ENCODE measurements at regions of chr4 and their contacts with region 1.

Region 1: DNA sequence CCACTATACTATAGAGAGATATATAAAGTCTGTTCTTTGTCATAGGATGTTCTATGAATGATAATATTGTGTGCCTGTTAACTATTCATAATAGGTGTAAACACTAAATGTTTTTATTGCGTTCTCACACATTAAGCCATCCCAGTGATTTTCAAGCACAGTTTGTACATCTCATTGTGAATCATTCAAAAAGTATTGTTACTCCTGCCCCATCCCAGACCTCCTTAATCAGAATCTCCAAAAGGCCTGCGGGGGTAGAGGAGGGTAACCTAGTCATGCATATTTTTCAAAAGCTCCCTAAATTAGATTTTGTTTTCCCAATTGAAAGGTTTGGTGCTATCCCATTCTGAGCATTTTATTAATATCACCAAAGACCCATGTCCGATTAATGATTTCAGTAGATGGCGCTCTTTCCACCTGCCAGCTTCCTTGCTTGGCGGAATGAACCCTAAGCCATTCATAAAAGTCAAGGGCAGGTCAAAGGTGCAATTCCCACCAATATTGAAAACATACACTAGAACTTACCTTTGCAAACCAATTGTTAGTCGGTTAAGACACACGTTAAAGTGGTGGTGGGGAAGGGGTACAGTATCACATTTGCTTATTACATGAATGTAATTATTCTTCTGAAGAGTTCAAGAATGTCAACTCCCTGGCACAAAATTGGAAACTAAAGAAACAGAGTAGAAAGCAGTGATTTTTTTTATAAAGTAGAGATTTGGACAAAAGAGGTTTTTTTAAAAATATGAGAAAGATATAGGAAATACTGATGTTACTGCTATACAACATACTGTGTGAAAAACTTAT is 5.8 kb upstream of the TET2 start:
- DNase-seq: peak in 1 of 10 donors; percentile 39

Region 2: DNA sequence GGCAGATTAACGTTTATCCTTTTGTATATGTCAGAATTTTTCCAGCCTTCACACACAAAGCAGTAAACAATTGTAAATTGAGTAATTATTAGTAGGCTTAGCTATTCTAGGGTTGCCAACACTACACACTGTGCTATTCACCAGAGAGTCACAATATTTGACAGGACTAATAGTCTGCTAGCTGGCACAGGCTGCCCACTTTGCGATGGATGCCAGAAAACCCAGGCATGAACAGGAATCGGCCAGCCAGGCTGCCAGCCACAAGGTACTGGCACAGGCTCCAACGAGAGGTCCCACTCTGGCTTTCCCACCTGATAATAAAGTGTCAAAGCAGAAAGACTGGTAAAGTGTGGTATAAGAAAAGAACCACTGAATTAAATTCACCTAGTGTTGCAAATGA is 100.6 kb after region 1 on chr4:
- intact Hi-C with region 1: loop called (anchors 5 kb)
- DNase-seq: peak; percentile 54 to 93 (median 65)

Measured in posterior cingulate gyrus (tissue), 11 donors.